ENCODE measurements at regions of chr19 and their contacts with region 1.

Region 1: DNA sequence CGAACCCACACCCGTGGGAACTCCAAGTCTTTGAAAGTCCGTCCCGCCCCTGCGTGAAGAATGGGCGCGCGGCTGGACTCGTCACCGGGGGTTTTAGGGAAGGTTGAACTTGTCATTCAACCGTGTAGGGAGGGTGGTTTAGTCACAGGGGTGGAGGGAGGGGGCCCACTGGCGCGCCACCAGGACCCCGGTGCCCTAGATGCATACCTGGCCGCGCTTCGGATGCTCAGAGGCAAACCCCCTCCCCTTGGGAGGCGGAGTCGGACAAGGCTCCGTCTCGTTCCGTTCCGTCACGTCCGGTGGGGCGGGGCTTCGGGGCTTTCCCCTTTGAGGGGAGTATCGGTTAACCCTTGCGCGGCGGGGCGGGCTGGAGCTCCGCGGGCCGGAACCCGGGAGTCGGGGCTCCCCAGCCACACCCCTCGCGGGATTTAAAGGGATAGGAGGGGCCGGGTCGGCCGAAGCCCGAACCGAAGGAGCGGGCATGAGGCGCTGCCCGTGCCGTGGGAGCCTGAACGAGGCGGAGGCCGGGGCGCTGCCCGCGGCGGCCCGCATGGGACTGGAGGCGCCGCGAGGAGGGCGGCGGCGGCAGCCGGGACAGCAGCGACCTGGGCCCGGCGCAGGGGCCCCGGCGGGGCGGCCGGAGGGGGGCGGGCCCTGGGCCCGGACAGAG is at the starts of genes COQ8B and ITPKC:
- DNase-seq: peak; percentile 98 to 100 (median 100)
- ATAC-seq: peak; percentile 74
- H3K4me3 ChIP-seq: peak within 1 kb of the TSS; percentile 66 to 93
- H3K4me3 Mint-ChIP-seq: peak within 1 kb of the TSS; percentile 88
- H3K27ac ChIP-seq: peak within 1 kb of the TSS; percentile 88 to 89
- H3K27ac Mint-ChIP-seq: peak within 1 kb of the TSS; percentile 97
- H3K4me1 ChIP-seq: peaks cover 61% of the 10 kb centered on the region
- H3K4me1 Mint-ChIP-seq: peaks cover 70% of the 10 kb centered on the region
- H3K27me3 ChIP-seq: no peaks in the 10 kb centered on the region
- H3K27me3 Mint-ChIP-seq: no peaks in the 10 kb centered on the region
- CTCF ChIP-seq: no peak
- total RNA-seq, gene COQ8B: 14.0 to 14.2 TPM
- total RNA-seq, gene ITPKC: 5.9 to 6.4 TPM

Region 2: DNA sequence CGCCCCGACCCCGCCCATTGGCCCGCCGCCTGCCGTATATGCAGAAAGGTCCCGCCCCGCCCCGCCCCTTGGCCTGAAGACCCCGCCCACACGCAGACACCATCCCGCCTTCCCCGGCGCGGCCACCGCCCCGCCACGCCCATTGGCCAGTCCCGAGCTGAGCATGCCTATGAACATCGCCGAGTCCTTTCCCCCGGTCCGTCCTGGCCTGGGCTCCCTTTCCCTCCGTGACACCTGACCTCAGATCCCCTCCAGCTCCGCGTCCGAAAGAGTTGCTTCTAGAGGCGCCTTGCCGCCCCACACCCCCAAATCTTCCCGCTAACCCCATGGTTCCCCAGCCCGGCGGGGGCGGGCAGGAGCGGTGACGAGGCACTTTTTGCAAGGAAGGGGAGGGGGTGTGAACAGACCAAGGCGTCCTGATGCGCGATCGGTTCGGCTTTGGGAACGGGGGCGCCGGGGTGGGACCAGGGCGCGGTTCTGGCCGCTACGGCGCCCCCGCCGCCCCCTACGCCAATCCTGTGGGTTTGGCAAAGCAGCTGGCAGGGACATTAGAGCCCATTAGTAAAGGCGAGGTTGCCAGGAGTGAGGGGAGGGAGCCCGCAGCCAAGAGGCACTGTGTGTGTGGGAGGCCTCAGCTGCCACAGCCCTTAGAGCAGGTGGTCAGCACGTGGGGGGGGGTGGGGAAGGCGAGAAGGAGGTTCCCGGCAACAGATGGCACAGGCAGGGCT is 25.9 kb before region 1 on chr19:
- CTCF ChIA-PET with region 1: no interaction called
- POLR2A ChIA-PET with region 1: interaction called, 3 read pairs
- intact Hi-C with region 1: loop called (anchors 1 kb)
- DNase-seq: peak; percentile 67 to 93 (median 85)
- ATAC-seq: peak; percentile 88
- H3K4me3 ChIP-seq: peak overlapping the region; percentile 65 to 76
- H3K4me3 Mint-ChIP-seq: peak overlapping the region; percentile 88
- H3K27ac ChIP-seq: peak overlapping the region in 1 of 2 experiments; percentile 40
- H3K27ac Mint-ChIP-seq: peak overlapping the region; percentile 75
- H3K4me1 ChIP-seq: peaks cover 23% of the 10 kb centered on the region
- H3K4me1 Mint-ChIP-seq: peaks cover 7% of the 10 kb centered on the region
- H3K27me3 ChIP-seq: peaks cover 0 to 3% of the 10 kb centered on the region in 2 experiments
- H3K27me3 Mint-ChIP-seq: no peaks in the 10 kb centered on the region
- CTCF ChIP-seq: no peak